Activated CD4-positive, alpha-beta T cell treated with anti-CD3 and anti-CD28 coated beads, Interleukin-2, amount 10 ng/mL, durations not matched to agents 24 days and 14 days (primary cell): ENCODE measurements at regions of chr9 and their contacts with region 1.

Region 1: DNA sequence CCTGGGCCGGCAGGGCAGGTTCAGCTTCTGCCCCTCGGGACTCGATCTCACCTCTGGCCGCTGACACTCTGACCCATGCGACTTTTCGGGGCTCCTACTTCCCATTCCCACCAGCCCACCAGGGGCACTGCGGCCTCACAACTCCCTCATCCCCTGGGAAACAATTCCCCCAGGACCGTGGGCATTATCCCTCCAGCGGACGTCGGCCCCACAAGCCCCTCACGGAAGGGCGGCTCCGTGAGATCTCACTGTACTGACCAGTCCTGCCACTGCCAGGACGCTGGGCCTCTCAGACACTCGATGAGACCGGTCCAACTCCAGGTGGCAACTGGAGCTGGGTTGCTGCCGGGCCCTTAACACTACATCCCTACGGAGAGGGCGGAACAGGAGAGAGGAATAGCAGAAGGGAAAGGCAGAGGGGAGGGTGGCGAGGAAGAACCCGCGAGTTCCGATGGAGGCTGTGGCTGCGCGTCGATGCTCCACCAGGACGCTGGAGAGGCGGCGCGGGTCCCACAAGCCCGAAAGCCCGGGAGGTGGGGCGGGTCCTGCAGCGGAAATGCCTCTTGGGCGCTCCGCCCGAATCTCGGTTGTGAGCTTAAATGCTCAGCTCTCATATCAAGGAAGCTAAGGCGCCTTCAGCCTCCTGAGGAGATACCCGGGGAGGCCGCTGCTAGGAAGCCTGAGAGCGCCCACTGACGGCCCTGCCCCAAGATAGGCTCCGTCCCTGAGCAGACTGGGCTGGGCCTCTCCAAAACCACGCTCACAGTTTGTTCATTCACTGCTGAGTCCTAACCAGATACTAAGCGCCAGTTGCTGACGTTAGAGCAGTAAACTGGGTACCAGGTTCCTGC is 36.3 kb downstream of the VCP start:
- DNase-seq: peak; percentile 89
- H3K4me3 Mint-ChIP-seq: peak overlapping the region; percentile 68
- H3K27ac Mint-ChIP-seq: peak overlapping the region; percentile 68
- H3K4me1 Mint-ChIP-seq: peaks cover 8% of the 10 kb centered on the region
- H3K27me3 Mint-ChIP-seq: no peaks in the 10 kb centered on the region

Region 2: DNA sequence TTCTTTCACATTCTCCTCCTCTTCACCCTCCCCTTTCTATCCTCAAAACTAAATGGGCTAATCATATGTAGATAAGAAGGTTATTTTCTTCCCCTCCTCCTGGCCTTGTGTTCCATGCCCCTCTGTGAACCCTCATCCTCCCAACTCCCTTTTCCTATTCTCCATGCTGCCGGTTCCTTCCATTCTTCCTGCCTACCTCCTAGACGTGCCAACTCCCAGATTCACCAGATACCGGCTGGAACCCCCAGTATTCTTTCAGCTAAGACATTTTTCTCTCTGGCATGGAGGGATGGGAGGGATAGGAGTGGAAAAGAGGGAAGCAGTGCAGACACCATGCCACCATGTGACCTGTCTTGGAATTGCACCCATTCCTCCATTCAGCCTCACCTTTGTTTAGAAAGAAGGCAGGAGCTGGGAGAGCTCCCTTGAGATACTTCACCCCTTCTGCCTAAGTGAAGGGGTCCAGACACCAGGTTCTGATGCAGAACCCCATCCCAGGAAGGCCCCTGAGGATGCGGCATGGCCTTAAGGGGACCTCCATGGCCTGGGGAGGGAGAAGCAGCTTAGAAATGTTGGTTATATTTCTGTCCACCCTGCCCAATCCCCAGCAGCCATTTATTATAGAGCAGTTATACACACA is 41.7 kb before region 1 on chr9:
- intact Hi-C with region 1: loop called (anchors 5 kb)
- DNase-seq: no peak
- H3K4me3 Mint-ChIP-seq: peak overlapping the region; percentile 28
- H3K27ac Mint-ChIP-seq: peak overlapping the region; percentile 86
- H3K4me1 Mint-ChIP-seq: peaks cover 54% of the 10 kb centered on the region
- H3K27me3 Mint-ChIP-seq: no peaks in the 10 kb centered on the region